ENCODE measurements at regions of chr3 and their contacts with region 1.

Region 1: GRCh38 chr3:122572940-122573412 is 4.5 kb upstream of the PARP15 start:
- DNase-seq: no peak
- ATAC-seq: peak; percentile 22
- H3K4me3 Mint-ChIP-seq: peak overlapping the region; percentile 57
- H3K27ac Mint-ChIP-seq: peak overlapping the region; percentile 93
- H3K4me1 Mint-ChIP-seq: peaks cover 80% of the 10 kb centered on the region
- H3K27me3 Mint-ChIP-seq: no peaks in the 10 kb centered on the region
- CTCF ChIP-seq: no peak

Region 2: GRCh38 chr3:122074621-122075265 is 498.2 kb before region 1 on chr3:
- CTCF ChIA-PET with region 1: no interaction called
- POLR2A ChIA-PET with region 1: no interaction called
- intact Hi-C with region 1: loop called (anchors 10 kb)
- DNase-seq: peak; percentile 32
- ATAC-seq: peak; percentile 18
- H3K4me3 Mint-ChIP-seq: peak overlapping the region; percentile 62
- H3K27ac Mint-ChIP-seq: peak overlapping the region; percentile 89
- H3K4me1 Mint-ChIP-seq: peaks cover 74% of the 10 kb centered on the region
- H3K27me3 Mint-ChIP-seq: no peaks in the 10 kb centered on the region
- CTCF ChIP-seq: no peak

Region 3: GRCh38 chr3:122123850-122124249 is 449.1 kb before region 1 on chr3:
- CTCF ChIA-PET with region 1: no interaction called
- POLR2A ChIA-PET with region 1: no interaction called
- intact Hi-C with region 1: no loop called
- DNase-seq: no peak
- ATAC-seq: no peak
- H3K4me3 Mint-ChIP-seq: no peak overlapping the region
- H3K27ac Mint-ChIP-seq: no peak overlapping the region
- H3K4me1 Mint-ChIP-seq: no peaks in the 10 kb centered on the region
- H3K27me3 Mint-ChIP-seq: no peaks in the 10 kb centered on the region
- CTCF ChIP-seq: no peak

Region 4: DNA sequence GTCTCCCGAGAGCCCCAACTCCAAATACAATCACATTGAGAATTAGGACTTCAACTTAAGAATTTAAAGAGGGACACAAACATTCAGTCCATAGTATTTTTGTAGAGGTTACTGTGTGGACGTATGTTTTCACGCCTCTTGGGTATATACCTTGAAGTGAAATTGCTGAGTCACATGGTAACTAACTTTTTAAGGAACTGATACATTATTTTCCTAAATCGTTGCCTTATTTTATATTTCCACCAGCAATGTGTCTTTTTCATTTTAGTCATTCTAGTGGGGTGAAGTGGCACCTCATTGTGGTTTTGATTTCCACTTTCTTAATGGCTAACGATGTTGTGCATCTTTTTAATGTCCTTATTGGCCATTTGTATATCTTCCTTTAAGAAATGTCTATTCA is 16.3 kb after region 1 on chr3:
- CTCF ChIA-PET with region 1: interaction called, 4 read pairs
- POLR2A ChIA-PET with region 1: interaction called, 20 read pairs
- intact Hi-C with region 1: loop called (anchors 1 kb)
- DNase-seq: no peak
- ATAC-seq: peak; percentile 56
- H3K4me3 Mint-ChIP-seq: peak overlapping the region; percentile 28
- H3K27ac Mint-ChIP-seq: peak overlapping the region; percentile 81
- H3K4me1 Mint-ChIP-seq: peaks cover 80% of the 10 kb centered on the region
- H3K27me3 Mint-ChIP-seq: no peaks in the 10 kb centered on the region
- CTCF ChIP-seq: no peak

Region 5: GRCh38 chr3:122609798-122610559 is 37.0 kb after region 1 on chr3:
- CTCF ChIA-PET with region 1: no interaction called
- POLR2A ChIA-PET with region 1: interaction called, 27 read pairs
- intact Hi-C with region 1: loop called (anchors 1 kb)
- DNase-seq: no peak
- ATAC-seq: peak; percentile 88
- H3K4me3 Mint-ChIP-seq: peak overlapping the region; percentile 37
- H3K27ac Mint-ChIP-seq: peak overlapping the region; percentile 80
- H3K4me1 Mint-ChIP-seq: peaks cover 41% of the 10 kb centered on the region
- H3K27me3 Mint-ChIP-seq: no peaks in the 10 kb centered on the region
- CTCF ChIP-seq: no peak

Region 6: GRCh38 chr3:122697952-122698620 is 125.1 kb after region 1 on chr3:
- CTCF ChIA-PET with region 1: interaction called, 4 read pairs
- POLR2A ChIA-PET with region 1: interaction called, 25 read pairs
- intact Hi-C with region 1: loop called (anchors 1 kb)
- DNase-seq: peak; percentile 48
- ATAC-seq: peak; percentile 95
- H3K4me3 Mint-ChIP-seq: peak overlapping the region; percentile 52
- H3K27ac Mint-ChIP-seq: peak overlapping the region; percentile 92
- H3K4me1 Mint-ChIP-seq: peaks cover 94% of the 10 kb centered on the region
- H3K27me3 Mint-ChIP-seq: no peaks in the 10 kb centered on the region
- CTCF ChIP-seq: no peak

Measured in activated B cell treated with CpG ODN at 0.5 μM for 24 hours (primary cell).